ENCODE measurements at regions of chr15 and their contacts with region 1.

Region 1: DNA sequence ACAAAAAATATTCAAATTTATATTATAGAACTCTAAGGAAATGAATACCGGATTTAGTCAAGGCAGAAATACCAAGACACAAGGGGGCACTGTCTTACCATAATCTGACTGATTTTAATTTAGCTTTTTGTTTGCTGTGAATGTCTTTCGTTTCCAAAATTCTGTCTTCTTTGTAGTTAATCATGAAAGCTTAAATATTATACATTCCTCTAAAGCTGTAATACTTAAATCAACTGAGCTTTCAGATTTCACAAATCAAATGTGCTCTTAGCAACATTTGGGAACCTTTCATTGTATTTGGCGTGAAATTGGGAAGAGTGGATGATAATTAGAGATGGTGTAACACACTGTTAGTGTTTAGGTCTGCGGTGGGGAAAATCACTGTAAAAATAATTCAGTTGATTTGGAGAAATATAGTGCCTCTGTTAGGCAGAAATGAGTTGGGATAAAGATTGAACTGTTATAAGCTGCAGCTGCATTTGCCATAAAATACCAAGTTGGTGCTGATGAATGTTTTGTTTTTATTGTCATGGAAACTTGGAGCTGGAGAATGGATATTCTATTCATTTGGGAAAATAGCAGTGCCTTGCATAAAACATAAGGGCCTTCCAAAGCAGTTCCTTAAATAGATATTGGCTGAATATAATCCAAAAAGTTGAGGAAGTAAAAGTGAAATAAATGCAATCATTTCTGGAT is 228.2 kb downstream of the TCF12 start:
- DNase-seq: peak; percentile 21
- H3K4me3 ChIP-seq: no peak overlapping the region
- H3K27ac ChIP-seq: peak overlapping the region in 1 of 2 experiments; percentile 41; a peak in 1 of 4 replicates
- H3K4me1 ChIP-seq: peaks cover 3 to 42% of the 10 kb centered on the region in 2 experiments; a peak in 3 of 4 replicates
- H3K27me3 ChIP-seq: no peaks in the 10 kb centered on the region
- CTCF ChIP-seq: peak; percentile 91
- EP300 ChIP-seq: no peak
- RAD21 ChIP-seq: peak; percentile 86

Region 2: GRCh38 chr15:57158589-57158988 is 11.9 kb after region 1 on chr15:
- CTCF ChIA-PET with region 1: interaction called, 58 read pairs
- POLR2A ChIA-PET with region 1: no interaction called
- DNase-seq: peak; percentile 9
- H3K4me3 ChIP-seq: no peak overlapping the region
- H3K27ac ChIP-seq: peak overlapping the region in 1 of 2 experiments; percentile 49; a peak in 3 of 4 replicates
- H3K4me1 ChIP-seq: peaks cover 9 to 44% of the 10 kb centered on the region in 2 experiments; a peak in 3 of 4 replicates
- H3K27me3 ChIP-seq: no peaks in the 10 kb centered on the region
- CTCF ChIP-seq: no peak
- EP300 ChIP-seq: peak in 1 of 2 experiments; percentile 55; a peak in 2 of 4 replicates
- RAD21 ChIP-seq: no peak

Region 3: GRCh38 chr15:57205996-57206395 is 59.3 kb after region 1 on chr15:
- CTCF ChIA-PET with region 1: interaction called, 89 read pairs
- POLR2A ChIA-PET with region 1: no interaction called
- DNase-seq: no peak
- H3K4me3 ChIP-seq: no peak overlapping the region
- H3K27ac ChIP-seq: no peak overlapping the region
- H3K4me1 ChIP-seq: no peaks in the 10 kb centered on the region; a peak in 2 of 4 replicates
- H3K27me3 ChIP-seq: no peaks in the 10 kb centered on the region
- CTCF ChIP-seq: no peak
- EP300 ChIP-seq: no peak
- RAD21 ChIP-seq: no peak

Region 4: GRCh38 chr15:57218826-57219576 is 72.3 kb after region 1 on chr15:
- CTCF ChIA-PET with region 1: interaction called, 89 read pairs
- POLR2A ChIA-PET with region 1: no interaction called
- DNase-seq: peak; percentile 27
- H3K4me3 ChIP-seq: peak overlapping the region; percentile 50 to 59
- H3K27ac ChIP-seq: peak overlapping the region; percentile 89 to 90
- H3K4me1 ChIP-seq: peaks cover 32 to 35% of the 10 kb centered on the region in 2 experiments; a peak in 3 of 4 replicates
- H3K27me3 ChIP-seq: no peaks in the 10 kb centered on the region
- CTCF ChIP-seq: no peak
- EP300 ChIP-seq: peak in 1 of 2 experiments; percentile 26; a peak in 1 of 4 replicates
- RAD21 ChIP-seq: no peak

Region 5: GRCh38 chr15:57527382-57528091 is 380.9 kb after region 1 on chr15:
- CTCF ChIA-PET with region 1: interaction called, 13 read pairs
- POLR2A ChIA-PET with region 1: no interaction called
- DNase-seq: peak; percentile 51
- H3K4me3 ChIP-seq: no peak overlapping the region
- H3K27ac ChIP-seq: no peak overlapping the region
- H3K4me1 ChIP-seq: peaks cover 0 to 10% of the 10 kb centered on the region in 2 experiments; a peak in 1 of 4 replicates
- H3K27me3 ChIP-seq: no peaks in the 10 kb centered on the region
- CTCF ChIP-seq: peak; percentile 71
- EP300 ChIP-seq: no peak
- RAD21 ChIP-seq: peak; percentile 95